Activated naive CD4-positive, alpha-beta T cell treated with anti-CD3 and anti-CD28 coated beads for 36 hours (primary cell): ENCODE measurements at regions of chr9 and their contacts with region 1.

Region 1: DNA sequence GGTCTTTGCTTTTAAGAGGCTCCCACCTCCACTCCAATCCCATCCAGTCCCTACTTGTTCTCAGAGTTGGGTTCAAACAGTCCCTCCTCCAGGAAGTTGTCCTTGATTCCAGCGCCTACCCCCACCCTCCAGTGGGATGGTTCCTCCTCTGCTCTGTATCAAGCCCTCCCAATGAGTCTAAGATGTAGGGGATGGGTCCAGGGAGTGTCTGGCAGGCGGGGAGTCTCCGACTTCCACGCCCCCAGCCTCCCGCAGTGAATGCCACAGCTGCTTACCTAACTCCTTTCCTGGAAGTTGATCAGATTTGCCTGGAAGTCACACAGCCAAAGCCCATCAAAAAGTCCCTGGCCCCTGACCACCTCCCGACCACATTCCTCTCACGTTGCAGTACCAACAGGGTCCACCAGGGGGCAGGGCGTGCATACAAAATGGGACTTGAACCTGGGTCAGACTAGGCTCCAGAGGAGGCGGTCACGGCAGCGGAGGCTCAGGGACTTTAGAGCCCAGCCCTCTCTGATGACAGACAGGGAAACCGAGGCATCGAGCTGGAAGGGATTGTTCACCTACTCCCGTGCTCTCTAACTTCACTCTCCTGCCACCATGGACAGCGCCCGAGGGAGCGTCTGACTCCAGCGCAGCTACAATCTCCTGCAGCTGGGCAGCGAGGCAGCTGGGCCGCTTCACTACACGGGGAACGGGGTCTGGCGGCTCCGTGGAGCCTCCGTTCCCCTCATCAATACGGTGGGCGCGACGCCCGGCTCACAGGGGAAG is 25.0 kb upstream of the TDRD7 start:
- DNase-seq: peak; percentile 86
- H3K4me3 Mint-ChIP-seq: no peak overlapping the region
- H3K27ac Mint-ChIP-seq: no peak overlapping the region
- H3K4me1 Mint-ChIP-seq: peaks cover 19% of the 10 kb centered on the region
- H3K27me3 Mint-ChIP-seq: peaks cover 14% of the 10 kb centered on the region

Region 2: DNA sequence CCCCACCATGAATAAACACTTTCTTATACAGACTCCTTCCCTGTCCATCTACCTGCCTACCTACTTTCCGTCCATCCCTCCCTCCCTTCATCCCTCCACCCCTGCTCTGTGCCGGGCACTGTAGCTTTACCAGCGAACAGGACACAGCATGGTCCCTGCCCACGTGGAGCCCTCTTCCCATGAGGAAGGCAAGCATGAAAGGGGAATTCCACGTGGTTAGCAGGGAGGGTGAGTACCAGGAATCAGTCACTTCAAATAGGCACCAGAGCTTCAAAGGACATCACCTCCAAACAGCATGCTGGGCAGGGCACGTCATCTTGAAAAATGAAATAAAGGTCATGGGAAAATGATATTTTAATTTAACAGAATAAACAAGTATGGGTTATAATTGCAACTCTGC is 10.0 kb before region 1 on chr9:
- CTCF ChIA-PET with region 1: interaction called, 21 read pairs
- intact Hi-C with region 1: no loop called
- DNase-seq: no peak
- H3K4me3 Mint-ChIP-seq: no peak overlapping the region
- H3K27ac Mint-ChIP-seq: no peak overlapping the region
- H3K4me1 Mint-ChIP-seq: no peaks in the 10 kb centered on the region
- H3K27me3 Mint-ChIP-seq: no peaks in the 10 kb centered on the region

Region 3: DNA sequence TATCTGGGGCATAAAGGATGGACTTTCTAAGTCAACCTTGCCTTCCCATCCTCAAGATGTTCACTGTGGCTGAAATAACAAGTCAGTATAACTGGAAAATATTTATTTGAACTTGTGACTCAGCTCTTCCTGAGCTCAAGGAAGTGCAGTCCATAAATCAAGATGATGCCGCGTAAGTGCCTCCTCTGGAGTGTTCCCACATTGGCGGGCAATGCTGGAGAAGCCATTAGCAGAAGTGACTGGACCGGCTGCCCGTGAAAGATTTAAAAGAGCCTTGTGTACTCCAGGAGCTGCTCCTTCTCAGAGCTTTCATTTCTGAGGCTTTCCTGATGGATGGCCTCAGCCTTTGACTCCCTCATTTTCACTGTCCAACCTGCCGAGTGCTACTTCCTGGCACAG is 132.0 kb after region 1 on chr9:
- CTCF ChIA-PET with region 1: no interaction called
- intact Hi-C with region 1: no loop called
- DNase-seq: no peak
- H3K4me3 Mint-ChIP-seq: no peak overlapping the region
- H3K27ac Mint-ChIP-seq: no peak overlapping the region
- H3K4me1 Mint-ChIP-seq: peaks cover 5% of the 10 kb centered on the region
- H3K27me3 Mint-ChIP-seq: peaks cover 36% of the 10 kb centered on the region